Ascending aorta (tissue), 2 donors: ENCODE measurements at regions of chr2 and their contacts with region 1.

Region 1: GRCh38 chr2:159090514-159091201 is 122.2 kb downstream of the TANC1 start:
- DNase-seq: no peak
- H3K4me3 ChIP-seq: peak overlapping the region; percentile 2 to 8
- H3K27ac ChIP-seq: peak overlapping the region; percentile 77 to 86
- H3K4me1 ChIP-seq: peaks cover 23 to 83% of the 10 kb centered on the region in 2 donors
- H3K27me3 ChIP-seq: no peaks in the 10 kb centered on the region
- CTCF ChIP-seq: no peak

Region 2: GRCh38 chr2:158781353-158781961 is 309.2 kb before region 1 on chr2:
- intact Hi-C with region 1: no loop called
- DNase-seq: no peak
- H3K4me3 ChIP-seq: no peak overlapping the region
- H3K27ac ChIP-seq: peak overlapping the region; percentile 32 to 34
- H3K4me1 ChIP-seq: peaks cover 3 to 33% of the 10 kb centered on the region in 2 donors
- H3K27me3 ChIP-seq: no peaks in the 10 kb centered on the region
- CTCF ChIP-seq: no peak

Region 3: GRCh38 chr2:159044804-159045286 is 45.8 kb before region 1 on chr2:
- intact Hi-C with region 1: loop called (anchors 5 kb)
- DNase-seq: no peak
- H3K4me3 ChIP-seq: no peak overlapping the region
- H3K27ac ChIP-seq: peak overlapping the region in 1 of 2 donors; percentile 20
- H3K4me1 ChIP-seq: peaks cover 13 to 54% of the 10 kb centered on the region in 2 donors
- H3K27me3 ChIP-seq: no peaks in the 10 kb centered on the region
- CTCF ChIP-seq: no peak

Region 4: DNA sequence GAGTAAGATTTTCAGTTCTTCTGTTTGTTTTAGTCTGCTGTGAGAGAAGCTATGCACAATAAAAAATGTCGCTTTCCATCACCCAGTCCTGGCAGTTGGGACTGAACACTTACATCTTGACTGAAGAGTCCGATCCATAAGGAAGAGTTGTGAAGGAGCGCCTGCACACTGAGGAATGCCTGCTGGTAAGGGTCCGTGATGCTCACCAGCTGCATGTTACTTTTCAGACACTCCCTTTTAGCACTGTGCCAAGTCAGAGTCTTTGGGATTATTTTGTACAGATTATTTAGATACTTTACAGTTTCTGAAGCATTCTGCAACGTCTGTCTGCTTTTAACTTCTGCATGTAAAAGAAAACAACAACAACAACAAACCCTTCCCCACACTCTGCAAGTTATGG is 750.0 kb after region 1 on chr2:
- intact Hi-C with region 1: no loop called
- DNase-seq: no peak
- H3K4me3 ChIP-seq: no peak overlapping the region
- H3K27ac ChIP-seq: no peak overlapping the region
- H3K4me1 ChIP-seq: no peaks in the 10 kb centered on the region
- H3K27me3 ChIP-seq: no peaks in the 10 kb centered on the region
- CTCF ChIP-seq: no peak